Natural killer cell (primary cell): ENCODE measurements at regions of chr20 and their contacts with region 1.

Region 1: GRCh38 chr20:3820048-3820900 is at the start of gene AP5S1:
- DNase-seq: peak; percentile 95 to 97
- ATAC-seq: peak; percentile 82 to 90 (median 85)
- H3K4me3 ChIP-seq: peak within 1 kb of the TSS; percentile 69
- H3K4me3 Mint-ChIP-seq: peak within 1 kb of the TSS; percentile 89
- H3K27ac ChIP-seq: peak within 1 kb of the TSS; percentile 98
- H3K27ac Mint-ChIP-seq: peak within 1 kb of the TSS; percentile 97
- H3K4me1 ChIP-seq: peaks cover 54% of the 10 kb centered on the region
- H3K4me1 Mint-ChIP-seq: peaks cover 43 to 61% of the 10 kb centered on the region in 2 donors
- H3K27me3 ChIP-seq: no peaks in the 10 kb centered on the region
- H3K27me3 Mint-ChIP-seq: no peaks in the 10 kb centered on the region
- CTCF ChIP-seq: peak; percentile 97
- total RNA-seq, gene AP5S1: 7.9 to 12.3 (median 12.1) TPM

Region 2: GRCh38 chr20:3753098-3753980 is 66.9 kb before region 1 on chr20:
- intact Hi-C with region 1: no loop called
- DNase-seq: peak; percentile 53 to 84
- ATAC-seq: peak; percentile 78 to 97 (median 84)
- H3K4me3 ChIP-seq: no peak overlapping the region
- H3K4me3 Mint-ChIP-seq: peak overlapping the region; percentile 35
- H3K27ac ChIP-seq: no peak overlapping the region
- H3K27ac Mint-ChIP-seq: no peak overlapping the region
- H3K4me1 ChIP-seq: no peaks in the 10 kb centered on the region
- H3K4me1 Mint-ChIP-seq: peaks cover 0 to 4% of the 10 kb centered on the region in 2 donors
- H3K27me3 ChIP-seq: no peaks in the 10 kb centered on the region
- H3K27me3 Mint-ChIP-seq: no peaks in the 10 kb centered on the region
- CTCF ChIP-seq: peak; percentile 71

Region 3: GRCh38 chr20:3767427-3768341 is 52.6 kb before region 1 on chr20 and contains the start of gene ADISSP:
- intact Hi-C with region 1: loop called (anchors 1 kb)
- DNase-seq: peak; percentile 96 to 98
- ATAC-seq: peak; percentile 87 to 96 (median 91)
- H3K4me3 ChIP-seq: peak within 1 kb of the TSS; percentile 91
- H3K4me3 Mint-ChIP-seq: peak within 1 kb of the TSS; percentile 88
- H3K27ac ChIP-seq: peak within 1 kb of the TSS; percentile 98
- H3K27ac Mint-ChIP-seq: peak within 1 kb of the TSS; percentile 83 to 94
- H3K4me1 ChIP-seq: peaks cover 45% of the 10 kb centered on the region
- H3K4me1 Mint-ChIP-seq: peaks cover 5 to 33% of the 10 kb centered on the region in 2 donors
- H3K27me3 ChIP-seq: no peaks in the 10 kb centered on the region
- H3K27me3 Mint-ChIP-seq: no peaks in the 10 kb centered on the region
- CTCF ChIP-seq: no peak
- total RNA-seq, gene ADISSP: 10.1 to 13.5 (median 12.3) TPM

Region 4: DNA sequence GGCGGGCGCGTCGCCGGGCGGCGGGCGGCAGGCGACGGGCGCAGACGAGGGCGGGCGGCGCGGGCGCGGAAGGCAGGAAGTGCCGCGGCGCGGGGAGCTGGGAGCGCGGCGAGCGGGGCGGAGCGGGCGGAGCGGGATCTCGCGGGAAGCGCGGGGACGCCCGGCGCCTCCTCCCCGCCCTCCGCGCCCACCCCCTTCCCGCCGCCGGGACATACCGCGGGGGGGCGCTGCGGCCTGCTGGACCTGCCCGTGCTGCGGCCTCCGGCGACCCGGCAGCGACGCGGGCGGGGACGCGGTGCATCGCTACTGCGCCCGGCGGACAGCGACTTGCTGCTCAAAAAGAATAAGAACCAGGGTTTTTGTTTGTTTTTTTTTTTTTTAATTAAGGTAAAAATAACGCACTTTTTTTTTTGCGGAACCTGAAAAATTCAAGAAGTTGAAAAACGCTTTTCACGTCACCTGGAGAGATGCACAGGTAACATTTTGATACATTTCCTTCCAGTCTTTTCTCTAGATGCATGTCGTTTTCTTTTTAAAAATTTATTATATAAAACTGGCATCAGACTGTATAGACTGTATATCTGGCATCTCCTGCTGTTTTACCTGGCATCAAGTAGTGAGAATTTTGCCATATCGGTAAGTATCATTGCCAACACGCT is 33.5 kb before region 1 on chr20 and contains the start of gene CENPB:
- intact Hi-C with region 1: loop called (anchors 1 kb)
- DNase-seq: peak; percentile 93
- ATAC-seq: peak; percentile 93 to 98 (median 95)
- H3K4me3 ChIP-seq: peak within 1 kb of the TSS; percentile 50
- H3K4me3 Mint-ChIP-seq: peak within 1 kb of the TSS; percentile 84
- H3K27ac ChIP-seq: peak within 1 kb of the TSS; percentile 57
- H3K27ac Mint-ChIP-seq: peak within 1 kb of the TSS; percentile 65 to 69
- H3K4me1 ChIP-seq: peaks cover 25% of the 10 kb centered on the region
- H3K4me1 Mint-ChIP-seq: peaks cover 18 to 44% of the 10 kb centered on the region in 2 donors
- H3K27me3 ChIP-seq: no peaks in the 10 kb centered on the region
- H3K27me3 Mint-ChIP-seq: no peaks in the 10 kb centered on the region
- CTCF ChIP-seq: peak; percentile 84
- total RNA-seq, gene CENPB: 46.7 to 62.6 (median 55.4) TPM

Region 5: DNA sequence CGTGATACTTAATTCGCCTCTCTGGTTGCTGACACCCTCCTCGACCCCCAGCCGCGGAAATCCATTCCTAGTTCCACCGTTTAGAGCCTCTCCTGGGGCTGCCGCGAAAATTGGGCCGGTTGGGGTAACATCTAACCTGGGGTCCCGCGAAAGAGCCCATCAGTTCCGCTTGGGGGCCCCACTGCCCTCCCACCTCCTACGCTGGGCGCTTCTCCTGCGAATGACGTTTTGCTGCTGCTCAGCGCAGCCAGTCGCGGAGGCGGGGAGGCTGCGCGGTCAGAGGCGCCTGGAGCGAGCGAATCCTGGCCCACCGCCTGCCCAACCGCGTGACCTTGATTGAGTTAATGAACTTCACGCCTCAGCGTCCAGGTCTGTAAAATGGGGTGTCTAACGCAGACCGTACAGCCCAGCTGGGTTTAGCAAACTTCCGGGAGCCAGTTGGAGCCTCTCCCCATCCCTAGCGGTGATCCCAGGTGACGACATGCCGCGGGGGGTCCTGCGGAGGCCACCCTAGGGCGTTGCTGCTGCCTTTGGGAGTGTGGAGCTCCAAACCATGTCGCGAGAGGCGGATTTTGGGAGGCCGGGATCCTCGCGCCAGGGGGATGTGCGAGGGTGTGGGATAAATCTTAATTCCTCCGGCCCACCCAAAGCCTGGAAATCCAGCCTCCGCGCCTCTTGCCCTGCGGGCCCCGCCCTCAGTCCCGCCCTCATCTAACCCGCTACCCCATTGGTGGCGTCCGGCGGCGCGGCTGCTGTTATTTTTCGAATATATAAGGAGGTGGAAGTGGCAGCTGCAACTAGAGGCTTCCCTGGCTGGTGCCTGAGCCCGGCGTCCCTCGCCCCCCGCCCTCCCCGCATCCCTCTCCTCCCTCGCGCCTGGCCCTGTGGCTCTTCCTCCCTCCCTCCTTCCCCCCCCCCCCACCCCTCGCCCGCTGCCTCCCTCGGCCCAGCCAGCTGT is 24.5 kb before region 1 on chr20 and contains the start of gene CDC25B:
- intact Hi-C with region 1: loop called (anchors 1 kb)
- DNase-seq: peak; percentile 84 to 91
- ATAC-seq: peak; percentile 85 to 93 (median 87)
- H3K4me3 ChIP-seq: peak within 1 kb of the TSS; percentile 87
- H3K4me3 Mint-ChIP-seq: peak within 1 kb of the TSS; percentile 97
- H3K27ac ChIP-seq: peak within 1 kb of the TSS; percentile 99
- H3K27ac Mint-ChIP-seq: peak within 1 kb of the TSS; percentile 96
- H3K4me1 ChIP-seq: peaks cover 57% of the 10 kb centered on the region
- H3K4me1 Mint-ChIP-seq: peaks cover 24 to 51% of the 10 kb centered on the region in 2 donors
- H3K27me3 ChIP-seq: no peaks in the 10 kb centered on the region
- H3K27me3 Mint-ChIP-seq: no peaks in the 10 kb centered on the region
- CTCF ChIP-seq: no peak
- total RNA-seq, gene CDC25B: 123 to 147 (median 143) TPM

Region 6: GRCh38 chr20:3846740-3847428 is 26.6 kb after region 1 on chr20 and contains the start of gene MAVS:
- intact Hi-C with region 1: loop called (anchors 2 kb)
- DNase-seq: peak; percentile 87 to 92
- ATAC-seq: peak; percentile 98
- H3K4me3 ChIP-seq: peak within 1 kb of the TSS; percentile 100
- H3K4me3 Mint-ChIP-seq: peak within 1 kb of the TSS; percentile 89
- H3K27ac ChIP-seq: peak within 1 kb of the TSS; percentile 85
- H3K27ac Mint-ChIP-seq: peak within 1 kb of the TSS; percentile 81 to 89
- H3K4me1 ChIP-seq: peaks cover 22% of the 10 kb centered on the region
- H3K4me1 Mint-ChIP-seq: peaks cover 16 to 31% of the 10 kb centered on the region in 2 donors
- H3K27me3 ChIP-seq: no peaks in the 10 kb centered on the region
- H3K27me3 Mint-ChIP-seq: no peaks in the 10 kb centered on the region
- CTCF ChIP-seq: no peak
- total RNA-seq, gene MAVS: 23.1 to 30.8 (median 26.4) TPM

Region 7: DNA sequence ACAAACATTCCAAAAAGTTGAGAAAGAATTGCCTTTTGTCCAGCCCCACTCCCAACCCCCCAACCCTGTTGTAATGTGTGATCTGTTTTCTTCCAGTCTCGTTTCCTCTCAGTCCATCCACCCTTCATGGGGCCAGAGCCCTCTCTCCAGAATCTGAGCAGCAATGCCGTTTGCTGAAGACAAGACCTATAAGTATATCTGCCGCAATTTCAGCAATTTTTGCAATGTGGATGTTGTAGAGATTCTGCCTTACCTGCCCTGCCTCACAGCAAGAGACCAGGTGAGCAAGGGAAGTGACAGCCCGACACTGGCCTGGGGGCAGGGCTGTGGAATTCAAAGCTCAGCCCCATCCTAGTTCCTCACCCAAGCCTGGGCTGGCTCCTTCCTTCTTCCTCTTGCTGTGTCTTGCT is 34.2 kb after region 1 on chr20:
- intact Hi-C with region 1: loop called (anchors 2 kb)
- DNase-seq: no peak
- ATAC-seq: no peak
- H3K4me3 ChIP-seq: no peak overlapping the region
- H3K4me3 Mint-ChIP-seq: no peak overlapping the region
- H3K27ac ChIP-seq: no peak overlapping the region
- H3K27ac Mint-ChIP-seq: no peak overlapping the region
- H3K4me1 ChIP-seq: no peaks in the 10 kb centered on the region
- H3K4me1 Mint-ChIP-seq: peaks cover 15 to 16% of the 10 kb centered on the region in 2 donors
- H3K27me3 ChIP-seq: no peaks in the 10 kb centered on the region
- H3K27me3 Mint-ChIP-seq: no peaks in the 10 kb centered on the region
- CTCF ChIP-seq: no peak

Region 8: DNA sequence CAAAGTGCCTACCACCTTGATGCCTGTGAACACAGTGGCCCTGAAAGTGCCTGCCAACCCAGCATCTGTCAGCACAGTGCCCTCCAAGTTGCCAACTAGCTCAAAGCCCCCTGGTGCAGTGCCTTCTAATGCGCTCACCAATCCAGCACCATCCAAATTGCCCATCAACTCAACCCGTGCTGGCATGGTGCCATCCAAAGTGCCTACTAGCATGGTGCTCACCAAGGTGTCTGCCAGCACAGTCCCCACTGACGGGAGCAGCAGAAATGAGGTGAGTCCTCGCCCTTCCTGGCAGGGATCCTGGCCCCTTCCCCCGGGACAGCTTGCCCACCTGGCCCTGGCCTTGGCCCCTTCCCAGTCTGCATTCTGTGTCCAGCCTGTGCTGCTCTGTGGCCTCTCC is 44.2 kb after region 1 on chr20:
- intact Hi-C with region 1: no loop called
- DNase-seq: no peak
- ATAC-seq: no peak
- H3K4me3 ChIP-seq: no peak overlapping the region
- H3K4me3 Mint-ChIP-seq: no peak overlapping the region
- H3K27ac ChIP-seq: no peak overlapping the region
- H3K27ac Mint-ChIP-seq: no peak overlapping the region
- H3K4me1 ChIP-seq: no peaks in the 10 kb centered on the region
- H3K4me1 Mint-ChIP-seq: peaks cover 0 to 4% of the 10 kb centered on the region in 2 donors
- H3K27me3 ChIP-seq: no peaks in the 10 kb centered on the region
- H3K27me3 Mint-ChIP-seq: no peaks in the 10 kb centered on the region
- CTCF ChIP-seq: no peak